Esophagus squamous epithelium (tissue), 5 donors: ENCODE measurements at regions of chr2 and their contacts with region 1.

Region 1: GRCh38 chr2:237572021-237572741 is 5.8 kb downstream of the PRLH start:
- DNase-seq: peak; percentile 37
- H3K4me3 ChIP-seq: peak overlapping the region in 1 of 4 donors; percentile 37
- H3K27ac ChIP-seq: no peak overlapping the region
- H3K4me1 ChIP-seq: peaks cover 6 to 37% (median 21%) of the 10 kb centered on the region in 3 donors
- H3K27me3 ChIP-seq: no peaks in the 10 kb centered on the region
- CTCF ChIP-seq: peak; percentile 87 to 98 (median 98)
- POLR2A ChIP-seq: no peak

Region 2: DNA sequence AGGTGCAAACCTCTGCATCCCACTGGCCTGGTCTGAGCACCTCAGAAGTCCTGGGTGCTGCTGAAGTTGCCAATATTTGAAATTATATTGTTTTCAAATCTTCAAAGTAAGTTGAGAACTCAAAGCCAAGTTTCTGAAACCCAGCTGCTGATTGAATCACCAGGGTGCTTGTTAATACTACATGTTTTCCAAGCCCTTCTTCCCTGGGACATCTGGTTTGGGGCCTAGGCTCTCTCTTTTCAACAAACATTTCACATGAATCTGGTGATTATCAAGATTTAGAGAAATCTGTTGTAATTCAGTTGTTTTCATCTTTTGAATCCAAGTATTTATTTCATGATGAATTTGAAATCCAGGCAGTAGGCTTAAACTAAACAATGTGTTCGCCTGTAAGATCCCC is 60.7 kb before region 1 on chr2:
- intact Hi-C with region 1: loop called (anchors 2 kb)
- DNase-seq: no peak
- H3K4me3 ChIP-seq: no peak overlapping the region
- H3K27ac ChIP-seq: peak overlapping the region in 3 of 4 donors; percentile 38 to 76 (median 68)
- H3K4me1 ChIP-seq: peaks cover 0 to 21% (median 7%) of the 10 kb centered on the region in 3 donors
- H3K27me3 ChIP-seq: no peaks in the 10 kb centered on the region
- CTCF ChIP-seq: no peak
- POLR2A ChIP-seq: no peak